ENCODE measurements at regions of chr7 and their contacts with region 1.

Region 1: DNA sequence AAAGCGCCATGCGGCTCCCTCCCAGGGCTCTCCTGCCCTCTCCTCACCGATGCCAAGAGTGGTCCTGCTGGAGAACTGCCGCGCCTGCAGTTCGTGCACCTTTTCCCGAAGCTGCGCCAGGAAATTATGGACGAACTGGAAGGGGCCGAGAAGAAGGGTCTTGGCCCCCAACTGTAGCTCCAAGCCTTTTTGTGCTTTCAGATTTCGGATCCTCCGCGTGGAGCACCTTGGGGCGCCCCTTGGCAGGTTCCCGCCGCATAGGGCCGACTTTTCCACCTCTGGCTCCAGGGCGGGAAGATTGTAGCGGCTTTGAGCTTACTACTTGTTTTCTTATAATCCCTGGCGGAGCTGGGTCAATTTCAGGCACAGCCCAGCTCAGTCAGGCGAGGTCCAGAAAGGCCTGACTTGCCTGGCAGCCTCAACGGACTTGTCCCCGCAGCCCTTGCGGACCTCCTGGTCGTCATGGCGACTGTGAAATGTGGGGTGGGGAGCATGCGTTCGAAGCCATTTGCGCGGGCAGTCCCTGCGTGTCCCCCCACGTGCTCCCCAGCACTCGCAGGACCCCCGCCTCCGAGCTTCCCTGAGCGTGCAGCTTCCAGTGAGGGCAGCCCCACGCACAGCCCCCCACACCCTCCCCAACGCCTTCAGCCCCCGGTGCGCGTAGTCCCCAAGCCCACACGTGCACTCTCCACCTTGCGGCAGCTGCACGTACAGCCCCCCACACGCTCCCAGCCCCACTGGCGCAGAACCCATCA is 129.9 kb downstream of the KBTBD2 start:
- DNase-seq: no peak
- H3K4me3 Mint-ChIP-seq: no peak overlapping the region
- H3K27ac Mint-ChIP-seq: no peak overlapping the region
- H3K4me1 Mint-ChIP-seq: peaks cover 9% of the 10 kb centered on the region
- H3K27me3 Mint-ChIP-seq: peaks cover 40% of the 10 kb centered on the region

Region 2: DNA sequence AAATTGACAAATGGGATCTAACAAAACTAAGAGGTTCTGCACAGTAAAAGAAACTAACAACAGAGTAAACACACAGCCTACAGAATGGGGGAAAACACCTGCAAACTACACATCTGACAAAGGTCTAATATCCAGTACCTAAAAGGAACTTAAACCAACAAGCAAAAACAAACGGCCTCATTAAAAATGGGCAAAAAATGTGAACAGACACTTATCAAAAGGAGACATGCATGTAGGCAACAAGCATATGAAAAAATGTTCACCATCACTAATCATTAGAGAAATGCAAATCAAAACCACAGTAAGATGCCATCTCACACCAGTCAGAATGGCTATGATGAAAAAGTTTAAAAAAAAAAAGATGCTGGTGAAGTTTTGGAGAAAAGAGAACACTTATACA is 67.4 kb before region 1 on chr7:
- CTCF ChIA-PET with region 1: no interaction called
- intact Hi-C with region 1: loop called (anchors 2 kb)
- DNase-seq: no peak
- H3K4me3 Mint-ChIP-seq: no peak overlapping the region
- H3K27ac Mint-ChIP-seq: no peak overlapping the region
- H3K4me1 Mint-ChIP-seq: peaks cover 8% of the 10 kb centered on the region
- H3K27me3 Mint-ChIP-seq: peaks cover 2% of the 10 kb centered on the region

Region 3: GRCh38 chr7:33905389-33906032 is 1143.9 kb after region 1 on chr7 and contains the start of gene BMPER:
- CTCF ChIA-PET with region 1: no interaction called
- intact Hi-C with region 1: no loop called
- DNase-seq: peak; percentile 43
- H3K4me3 Mint-ChIP-seq: peak within 1 kb of the TSS; percentile 70
- H3K27ac Mint-ChIP-seq: no peak within 1 kb of the TSS
- H3K4me1 Mint-ChIP-seq: peaks cover 6% of the 10 kb centered on the region
- H3K27me3 Mint-ChIP-seq: peaks cover 57% of the 10 kb centered on the region
- total RNA-seq, gene BMPER: not detected

Measured in activated naive CD4-positive, alpha-beta T cell treated with anti-CD3 and anti-CD28 coated beads for 36 hours (primary cell).